ENCODE measurements at regions of chr12 and their contacts with region 1.

Region 1: DNA sequence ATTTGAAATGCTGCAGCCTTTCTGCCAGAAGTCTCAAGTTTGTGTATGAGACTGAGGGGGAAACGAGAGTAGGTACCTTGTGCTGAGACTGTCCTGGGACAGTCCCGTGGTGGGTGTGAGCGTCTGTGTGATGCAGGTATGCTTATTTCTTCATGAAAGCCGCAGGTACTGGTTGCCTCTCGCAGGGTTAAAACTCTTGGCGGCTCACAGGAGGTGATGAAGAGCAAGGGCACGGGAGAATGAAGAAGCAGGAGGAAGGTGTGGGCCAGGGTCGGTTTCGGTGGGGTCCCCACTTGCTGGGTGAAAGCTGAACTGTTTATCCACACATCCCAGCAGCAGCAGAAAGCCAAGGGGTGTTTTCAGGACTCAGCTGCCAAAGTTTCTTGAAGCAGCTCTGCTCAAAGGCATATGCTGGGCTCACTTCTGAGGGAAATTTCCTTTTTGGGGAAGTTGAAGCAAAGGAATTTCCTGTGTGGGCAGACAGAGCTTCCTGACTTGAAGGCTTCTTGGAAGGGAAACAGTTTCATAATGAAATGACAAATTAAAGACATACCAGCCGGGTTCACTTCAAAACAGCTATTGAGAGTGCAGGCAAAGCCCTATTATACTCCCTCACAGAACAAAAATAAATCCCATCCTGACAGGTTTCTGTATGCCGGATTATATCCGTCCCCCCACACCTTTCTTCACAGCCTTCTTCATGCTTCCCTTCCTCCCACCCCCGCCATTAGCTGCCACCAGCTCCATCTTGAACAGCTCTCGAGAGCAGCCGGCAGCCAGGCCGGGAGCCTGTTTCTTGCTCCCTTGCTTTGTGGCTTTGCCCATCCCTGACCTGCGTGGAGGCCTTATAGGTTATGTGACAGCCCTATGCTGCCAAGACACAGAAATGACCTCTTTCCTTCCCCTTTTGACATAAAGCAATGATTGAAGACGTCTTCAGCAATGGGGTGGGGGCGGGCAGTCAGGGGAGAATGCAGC is 116.6 kb downstream of the ETV6 start:
- DNase-seq: peak; percentile 78
- H3K4me3 ChIP-seq: no peak overlapping the region
- H3K27ac ChIP-seq: peak overlapping the region; percentile 85
- H3K4me1 ChIP-seq: peaks cover 41% of the 10 kb centered on the region
- H3K27me3 ChIP-seq: no peaks in the 10 kb centered on the region
- CTCF ChIP-seq: no peak
- POLR2A ChIP-seq: peak; percentile 53

Region 2: GRCh38 chr12:11719678-11720099 is 46.4 kb before region 1 on chr12:
- CTCF ChIA-PET with region 1: interaction called, 4 read pairs
- POLR2A ChIA-PET with region 1: no interaction called
- dilution Hi-C with region 1: no loop called
- intact Hi-C with region 1: loop called (anchors 2 kb)
- DNase-seq: peak; percentile 94
- H3K4me3 ChIP-seq: no peak overlapping the region
- H3K27ac ChIP-seq: peak overlapping the region; percentile 95
- H3K4me1 ChIP-seq: peaks cover 60% of the 10 kb centered on the region
- H3K27me3 ChIP-seq: no peaks in the 10 kb centered on the region
- CTCF ChIP-seq: no peak
- POLR2A ChIP-seq: peak; percentile 21

Region 3: GRCh38 chr12:11746024-11746771 is 19.9 kb before region 1 on chr12:
- CTCF ChIA-PET with region 1: interaction called, 10 read pairs
- POLR2A ChIA-PET with region 1: interaction called, 3 read pairs
- dilution Hi-C with region 1: no loop called
- intact Hi-C with region 1: no loop called
- DNase-seq: peak; percentile 92
- H3K4me3 ChIP-seq: no peak overlapping the region
- H3K27ac ChIP-seq: peak overlapping the region; percentile 74
- H3K4me1 ChIP-seq: peaks cover 34% of the 10 kb centered on the region
- H3K27me3 ChIP-seq: no peaks in the 10 kb centered on the region
- CTCF ChIP-seq: no peak
- POLR2A ChIP-seq: peak; percentile 58

Region 4: GRCh38 chr12:11822081-11822834 is 56.2 kb after region 1 on chr12:
- CTCF ChIA-PET with region 1: no interaction called
- POLR2A ChIA-PET with region 1: no interaction called
- dilution Hi-C with region 1: no loop called
- intact Hi-C with region 1: no loop called
- DNase-seq: peak; percentile 84
- H3K4me3 ChIP-seq: no peak overlapping the region
- H3K27ac ChIP-seq: peak overlapping the region; percentile 46
- H3K4me1 ChIP-seq: peaks cover 16% of the 10 kb centered on the region
- H3K27me3 ChIP-seq: no peaks in the 10 kb centered on the region
- CTCF ChIP-seq: no peak
- POLR2A ChIP-seq: no peak

Region 5: GRCh38 chr12:11836282-11837151 is 70.4 kb after region 1 on chr12:
- CTCF ChIA-PET with region 1: no interaction called
- POLR2A ChIA-PET with region 1: no interaction called
- dilution Hi-C with region 1: no loop called
- intact Hi-C with region 1: loop called (anchors 2 kb)
- DNase-seq: no peak
- H3K4me3 ChIP-seq: no peak overlapping the region
- H3K27ac ChIP-seq: no peak overlapping the region
- H3K4me1 ChIP-seq: peaks cover 49% of the 10 kb centered on the region
- H3K27me3 ChIP-seq: no peaks in the 10 kb centered on the region
- CTCF ChIP-seq: no peak
- POLR2A ChIP-seq: no peak